ENCODE measurements at regions of chr6 and their contacts with region 1.

Region 1: GRCh38 chr6:24581084-24581669 is 64.8 kb downstream of the KIAA0319 start:
- DNase-seq: peak; percentile 45 to 75 (median 66)
- ATAC-seq: peak; percentile 70 to 88 (median 80)
- H3K4me3 ChIP-seq: no peak overlapping the region
- H3K27ac ChIP-seq: no peak overlapping the region
- H3K4me1 ChIP-seq: peaks cover 0 to 11% (median 2%) of the 10 kb centered on the region in 12 donors
- H3K27me3 ChIP-seq: no peaks in the 10 kb centered on the region
- CTCF ChIP-seq: peak; percentile 67 to 85 (median 82)
- POLR2A ChIP-seq: no peak

Region 2: DNA sequence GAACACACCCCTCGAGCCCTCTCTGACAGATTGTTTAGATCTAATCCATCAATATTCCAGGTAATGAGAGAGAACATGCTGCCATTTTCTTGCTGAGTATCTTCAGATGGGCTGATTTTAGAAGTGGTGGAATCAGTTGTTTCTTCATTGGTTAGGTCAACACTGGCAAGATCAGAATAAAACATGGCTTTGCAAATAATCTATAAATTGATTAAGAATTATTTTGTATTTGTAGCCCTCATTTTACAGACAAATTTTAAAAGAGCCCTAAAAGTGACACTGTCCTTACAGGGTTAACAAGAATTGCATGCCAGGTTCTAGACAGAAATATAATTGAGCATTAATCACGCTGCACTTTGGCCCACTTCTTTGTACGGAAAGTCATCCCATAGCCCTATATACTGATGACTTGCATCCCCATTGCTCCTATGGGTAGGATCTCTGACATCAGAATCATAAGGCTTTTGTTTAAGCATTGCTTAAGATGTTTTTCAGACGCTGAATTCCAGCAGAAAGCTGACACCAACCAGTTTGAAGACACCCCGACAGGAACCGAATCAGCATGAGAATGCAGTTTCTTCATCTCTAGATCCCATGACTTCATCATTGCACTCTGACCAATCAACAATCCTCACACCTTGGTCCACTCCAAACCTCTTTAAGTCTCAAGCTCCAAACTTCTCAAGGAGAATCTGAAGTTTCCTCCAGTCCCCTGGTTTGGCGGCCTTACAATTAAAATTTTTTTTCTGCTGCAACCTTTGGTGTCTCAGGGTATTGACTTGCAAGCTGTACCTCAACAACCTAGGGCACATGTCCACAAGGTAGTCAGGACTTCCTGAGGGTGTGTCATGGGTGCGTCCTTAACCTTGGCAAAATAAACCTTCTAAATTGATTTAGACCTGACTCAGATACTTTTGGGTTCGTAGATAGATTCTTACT is 77.7 kb after region 1 on chr6:
- intact Hi-C with region 1: loop called in 1 of 10 experiments (anchors 10 kb)
- DNase-seq: no peak
- ATAC-seq: peak in 1 of 4 donors; percentile 60
- H3K4me3 ChIP-seq: no peak overlapping the region
- H3K27ac ChIP-seq: peak overlapping the region in 1 of 12 donors; percentile 50
- H3K4me1 ChIP-seq: peaks cover 0 to 18% (median 0%) of the 10 kb centered on the region in 12 donors
- H3K27me3 ChIP-seq: no peaks in the 10 kb centered on the region
- CTCF ChIP-seq: no peak
- POLR2A ChIP-seq: no peak

Region 3: GRCh38 chr6:24689964-24690363 is 108.8 kb after region 1 on chr6:
- intact Hi-C with region 1: loop called in 9 of 10 experiments (anchors 1 to 5 kb)
- DNase-seq: no peak
- ATAC-seq: peak in 1 of 4 donors; percentile 68
- H3K4me3 ChIP-seq: no peak overlapping the region
- H3K27ac ChIP-seq: no peak overlapping the region
- H3K4me1 ChIP-seq: peaks cover 0 to 26% (median 7%) of the 10 kb centered on the region in 12 donors
- H3K27me3 ChIP-seq: no peaks in the 10 kb centered on the region
- CTCF ChIP-seq: no peak
- POLR2A ChIP-seq: no peak

Region 4: DNA sequence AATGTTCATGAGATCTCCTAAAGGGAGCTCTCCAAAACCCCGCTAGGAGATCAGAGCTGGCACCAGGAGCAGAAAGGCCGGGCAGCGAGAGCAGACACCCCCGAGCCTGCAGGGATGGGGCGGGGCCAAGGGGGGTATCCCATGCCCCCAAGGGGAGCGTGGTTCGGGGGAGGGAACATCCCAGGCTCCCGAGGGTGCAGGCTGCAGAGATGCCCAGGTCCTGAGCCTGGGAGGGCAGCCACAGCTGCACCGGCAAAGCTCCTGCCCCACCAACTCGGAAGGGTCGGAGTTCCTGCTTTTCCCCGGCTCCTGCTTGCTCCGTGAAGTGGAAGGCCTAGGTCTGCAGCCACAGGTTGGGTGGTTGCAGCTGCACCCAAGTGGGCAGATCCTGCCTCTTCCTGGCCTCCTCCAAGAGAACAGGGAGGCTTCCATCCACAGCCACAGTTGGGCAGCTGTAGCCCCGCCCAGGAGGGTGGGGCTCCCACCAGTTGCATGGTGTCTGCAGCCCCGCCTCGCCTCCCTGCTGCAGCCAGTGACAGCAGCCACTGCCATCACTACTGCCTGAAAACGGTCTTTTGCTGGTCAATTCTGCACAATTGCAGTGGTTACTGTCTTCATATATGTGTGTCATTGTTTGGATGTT is 180.1 kb after region 1 on chr6:
- intact Hi-C with region 1: loop called (anchors 1 to 10 kb)
- DNase-seq: no peak
- ATAC-seq: no peak
- H3K4me3 ChIP-seq: no peak overlapping the region
- H3K27ac ChIP-seq: no peak overlapping the region
- H3K4me1 ChIP-seq: peaks cover 0 to 9% (median 0%) of the 10 kb centered on the region in 12 donors
- H3K27me3 ChIP-seq: no peaks in the 10 kb centered on the region
- CTCF ChIP-seq: no peak
- POLR2A ChIP-seq: no peak

Region 5: GRCh38 chr6:25061289-25061936 is 480.2 kb after region 1 on chr6:
- intact Hi-C with region 1: loop called in 3 of 10 experiments (anchors 5 to 10 kb)
- DNase-seq: peak in 1 of 5 donors; percentile 28
- ATAC-seq: peak in 1 of 4 donors; percentile 26
- H3K4me3 ChIP-seq: no peak overlapping the region
- H3K27ac ChIP-seq: peak overlapping the region in 2 of 12 donors; percentile 3 to 23
- H3K4me1 ChIP-seq: peaks cover 0 to 35% (median 0%) of the 10 kb centered on the region in 12 donors
- H3K27me3 ChIP-seq: no peaks in the 10 kb centered on the region
- CTCF ChIP-seq: no peak
- POLR2A ChIP-seq: no peak

Measured in heart left ventricle (tissue), 16 donors.